ENCODE measurements at regions of chr11 and their contacts with region 1.

Region 1: DNA sequence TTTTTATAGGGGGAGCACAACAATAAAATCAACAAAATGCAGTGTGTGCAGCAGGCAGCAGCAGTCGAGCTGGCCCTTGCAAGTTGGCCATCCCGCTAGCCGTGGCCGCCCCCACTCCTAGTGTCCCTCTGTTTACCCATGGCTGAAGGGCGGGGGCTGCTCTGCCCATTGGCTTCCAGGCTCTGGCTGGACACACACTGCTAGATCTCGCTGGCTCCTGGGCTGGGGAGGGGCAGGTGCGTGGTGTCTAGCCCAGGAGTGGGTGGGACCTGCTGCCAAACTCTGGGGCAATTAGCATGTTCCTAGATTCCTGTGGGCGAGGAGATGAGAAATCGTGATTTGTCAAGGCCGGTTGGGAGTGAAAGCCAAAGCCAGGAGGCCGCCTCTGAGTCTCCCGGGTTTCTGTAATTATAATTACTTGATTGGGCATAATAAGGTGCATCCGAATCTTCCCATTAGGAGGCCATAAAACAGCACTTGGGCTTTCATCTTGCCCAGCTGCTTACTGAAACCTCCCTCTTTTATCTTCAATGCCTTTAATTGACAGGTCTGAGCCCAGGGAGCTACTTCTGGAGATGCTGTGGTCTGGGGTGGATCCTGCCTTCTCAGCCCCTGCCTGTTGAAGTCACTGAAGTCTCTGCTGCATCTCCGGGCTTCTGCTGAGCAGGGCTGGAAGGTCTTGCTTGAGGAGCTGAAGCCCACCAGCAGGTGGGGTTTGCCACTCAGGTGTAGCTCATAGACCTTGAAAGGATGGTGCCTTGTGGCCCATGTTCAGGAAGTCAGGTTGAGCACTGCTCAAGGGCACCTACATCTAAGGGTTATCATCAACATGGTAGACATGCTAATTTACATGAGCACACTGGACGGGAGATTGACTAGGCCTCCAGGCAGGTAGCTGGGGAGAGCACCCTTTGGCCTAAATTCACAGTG is 44.5 kb upstream of the DKK3 start:
- DNase-seq: peak; percentile 72 to 83
- H3K4me3 ChIP-seq: no peak overlapping the region
- H3K27ac ChIP-seq: peak overlapping the region; percentile 44
- H3K4me1 ChIP-seq: peaks cover 19% of the 10 kb centered on the region
- H3K27me3 ChIP-seq: no peaks in the 10 kb centered on the region
- CTCF ChIP-seq: no peak
- POLR2A ChIP-seq: no peak

Region 2: DNA sequence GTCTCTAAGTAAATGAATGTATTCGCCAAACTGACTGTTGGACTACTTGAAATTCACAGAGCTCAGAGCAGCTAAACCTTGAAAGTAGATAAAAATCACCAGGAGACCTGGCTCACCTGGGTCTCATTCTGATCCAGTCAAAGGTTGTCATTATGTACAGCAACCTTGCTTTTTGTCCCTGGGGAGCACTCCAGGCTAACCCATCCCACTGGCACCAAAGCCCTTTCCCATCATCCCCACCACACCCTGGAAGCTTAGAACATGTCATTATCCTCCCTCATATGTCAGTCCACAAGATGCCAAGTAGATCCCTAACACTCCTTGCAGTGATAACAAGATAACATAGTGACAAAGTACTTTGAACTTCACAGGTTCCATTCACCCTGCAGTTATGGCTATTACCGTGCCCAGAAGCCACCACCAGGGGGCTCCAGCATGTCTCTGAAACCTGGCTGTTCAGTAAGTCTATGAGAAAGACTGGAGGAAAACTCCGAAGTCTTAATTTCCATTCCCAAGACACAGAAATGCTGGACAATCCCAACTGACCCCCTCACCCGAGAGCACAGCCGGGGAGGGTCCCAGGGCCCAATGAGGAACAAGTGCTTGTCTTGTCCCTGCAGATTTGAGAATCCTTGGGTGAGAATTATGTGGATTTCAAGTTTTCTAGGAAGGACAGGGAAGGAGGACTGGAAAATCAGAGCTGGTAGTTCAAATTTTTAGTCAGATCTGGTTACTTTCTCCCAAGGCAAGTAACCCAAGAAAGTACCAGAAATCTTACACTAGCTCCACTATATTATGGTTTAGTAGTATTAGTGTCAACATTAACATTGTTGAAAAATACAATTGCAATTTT is 254.1 kb before region 1 on chr11:
- intact Hi-C with region 1: loop called (anchors 5 kb)
- DNase-seq: no peak
- H3K4me3 ChIP-seq: no peak overlapping the region
- H3K27ac ChIP-seq: no peak overlapping the region
- H3K4me1 ChIP-seq: no peaks in the 10 kb centered on the region
- H3K27me3 ChIP-seq: no peaks in the 10 kb centered on the region
- CTCF ChIP-seq: peak; percentile 66 to 91 (median 82)
- POLR2A ChIP-seq: no peak

Region 3: DNA sequence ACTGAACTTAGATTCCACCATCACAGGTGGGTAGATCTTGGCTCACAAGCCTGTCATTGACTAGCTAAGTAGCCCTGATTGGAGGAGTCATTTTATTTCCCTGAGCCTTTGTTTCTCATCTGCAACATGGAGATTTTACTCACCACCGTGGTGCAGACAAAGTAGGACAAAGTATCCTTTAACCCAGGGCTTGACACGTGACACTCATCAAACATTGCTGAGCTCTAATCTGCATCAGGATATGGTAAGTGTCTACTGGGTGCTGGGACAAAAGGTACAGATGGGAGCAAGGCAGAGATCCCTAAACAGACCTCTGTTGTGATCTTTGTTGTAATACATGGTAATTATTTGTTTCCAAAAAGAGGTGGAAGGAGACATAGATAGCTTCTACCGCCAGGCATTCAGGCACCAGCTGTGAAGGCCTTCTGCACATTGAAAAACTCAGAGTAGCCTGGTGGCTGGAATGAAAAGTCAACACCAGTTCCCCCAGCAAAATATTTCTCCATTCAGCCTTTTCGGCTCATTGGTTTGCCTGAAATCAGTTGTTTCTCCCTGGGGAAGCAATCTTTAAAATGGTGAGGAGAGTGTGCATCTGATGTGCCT is 39.1 kb after region 1 on chr11:
- intact Hi-C with region 1: no loop called
- DNase-seq: no peak
- H3K4me3 ChIP-seq: no peak overlapping the region
- H3K27ac ChIP-seq: no peak overlapping the region
- H3K4me1 ChIP-seq: peaks cover 39% of the 10 kb centered on the region
- H3K27me3 ChIP-seq: no peaks in the 10 kb centered on the region
- CTCF ChIP-seq: no peak
- POLR2A ChIP-seq: no peak

Region 4: DNA sequence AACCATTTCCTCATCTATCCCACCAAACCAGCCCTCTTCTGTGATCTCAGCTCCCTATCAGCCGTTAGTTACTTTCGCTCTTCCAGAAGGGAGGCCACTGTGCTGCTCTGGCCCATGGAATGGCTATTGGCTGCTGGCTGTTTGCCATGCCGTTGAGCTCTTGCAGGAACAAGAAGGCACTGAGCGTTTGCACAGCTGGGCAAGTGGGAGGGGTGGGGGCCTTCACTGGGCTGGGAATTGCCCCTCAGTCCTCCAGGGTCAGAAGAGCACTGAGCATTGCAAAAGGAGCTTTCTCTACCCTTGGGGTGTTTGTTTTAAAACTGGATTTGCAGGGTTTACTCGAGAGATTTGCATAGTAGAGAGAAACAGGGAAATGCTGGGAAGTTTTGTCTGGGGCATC is 195.4 kb after region 1 on chr11:
- intact Hi-C with region 1: loop called (anchors 10 kb)
- DNase-seq: no peak
- H3K4me3 ChIP-seq: no peak overlapping the region
- H3K27ac ChIP-seq: no peak overlapping the region
- H3K4me1 ChIP-seq: peaks cover 29% of the 10 kb centered on the region
- H3K27me3 ChIP-seq: no peaks in the 10 kb centered on the region
- CTCF ChIP-seq: no peak
- POLR2A ChIP-seq: no peak

Region 5: DNA sequence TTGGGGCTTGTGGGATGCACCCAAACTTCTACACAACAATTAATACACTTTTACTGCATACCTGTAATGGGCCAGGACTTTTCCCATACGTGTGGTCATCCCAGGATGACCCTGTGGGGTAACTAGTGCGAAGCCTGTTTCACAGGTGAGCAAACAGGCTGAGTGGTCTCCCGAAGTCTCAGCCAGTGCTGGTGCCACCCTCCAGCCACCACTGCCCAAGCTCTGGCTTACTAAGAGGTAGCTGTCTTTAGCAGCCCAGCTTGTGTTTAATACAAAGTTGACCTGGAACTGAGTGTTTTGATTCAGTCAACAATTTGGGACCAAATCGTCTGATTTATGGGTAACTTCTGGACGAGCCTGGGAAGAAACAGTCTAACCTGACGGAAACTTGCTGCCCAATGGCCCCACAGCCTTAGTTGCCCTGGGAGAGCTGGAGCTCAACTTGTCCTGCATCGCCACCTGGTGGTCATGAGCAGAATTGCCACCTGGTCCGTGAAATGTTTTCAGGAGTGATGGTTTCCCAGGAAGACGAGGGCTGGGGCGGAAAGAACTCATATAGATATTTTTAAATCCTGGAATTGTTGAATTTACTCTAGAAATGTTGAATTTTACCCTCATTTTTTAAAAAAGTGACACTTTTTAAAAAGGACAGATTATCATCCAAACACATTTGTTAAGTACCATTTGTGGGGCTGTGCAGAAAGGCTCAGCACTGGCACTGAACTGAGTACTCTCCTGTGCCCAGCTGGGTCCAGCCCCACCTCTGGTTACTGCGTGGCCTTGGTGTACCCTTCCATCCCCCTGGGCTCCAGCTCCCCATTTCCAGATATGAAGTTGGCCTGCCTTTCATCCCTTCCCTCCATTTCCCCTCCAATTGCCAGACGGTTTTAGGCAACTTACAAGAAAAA is 228.9 kb after region 1 on chr11:
- intact Hi-C with region 1: loop called (anchors 5 kb)
- DNase-seq: peak; percentile 82 to 90
- H3K4me3 ChIP-seq: no peak overlapping the region
- H3K27ac ChIP-seq: no peak overlapping the region
- H3K4me1 ChIP-seq: peaks cover 16% of the 10 kb centered on the region
- H3K27me3 ChIP-seq: no peaks in the 10 kb centered on the region
- CTCF ChIP-seq: peak; percentile 95 to 100 (median 99)
- POLR2A ChIP-seq: no peak